ENCODE measurements at regions of chr7 and their contacts with region 1.

Region 1: DNA sequence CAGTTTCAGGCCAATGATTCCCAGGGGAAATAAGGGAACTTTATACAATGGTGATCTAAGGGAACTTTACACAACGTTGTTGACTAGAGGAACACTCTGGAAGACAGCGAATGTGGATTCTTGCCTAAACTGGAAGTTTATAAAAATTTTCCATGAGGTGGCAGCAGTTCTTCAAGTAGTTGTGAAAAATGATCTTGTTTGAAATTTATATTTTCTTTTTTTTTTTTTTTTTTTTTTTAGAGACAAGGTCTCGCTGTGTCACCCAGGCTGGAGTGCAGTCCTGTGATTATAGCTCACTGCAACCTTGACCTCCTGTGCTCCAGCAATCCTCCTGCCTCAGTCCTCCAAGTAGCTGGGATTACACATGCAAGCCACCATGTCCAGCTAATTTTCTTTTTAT is 32.1 kb upstream of the GTF2I start:
- DNase-seq: peak in 1 of 5 donors; percentile 29
- H3K4me3 ChIP-seq: no peak overlapping the region
- H3K27ac ChIP-seq: no peak overlapping the region
- H3K4me1 ChIP-seq: peaks cover 5% of the 10 kb centered on the region
- H3K27me3 ChIP-seq: no peaks in the 10 kb centered on the region
- CTCF ChIP-seq: no peak
- EP300 ChIP-seq: no peak
- POLR2A ChIP-seq: no peak

Region 2: GRCh38 chr7:74439546-74439945 is 185.9 kb before region 1 on chr7:
- intact Hi-C with region 1: loop called in 1 of 4 experiments (anchors 5 kb)
- DNase-seq: no peak
- H3K4me3 ChIP-seq: no peak overlapping the region
- H3K27ac ChIP-seq: no peak overlapping the region
- H3K4me1 ChIP-seq: no peaks in the 10 kb centered on the region
- H3K27me3 ChIP-seq: no peaks in the 10 kb centered on the region
- CTCF ChIP-seq: no peak
- EP300 ChIP-seq: no peak
- POLR2A ChIP-seq: no peak

Region 3: DNA sequence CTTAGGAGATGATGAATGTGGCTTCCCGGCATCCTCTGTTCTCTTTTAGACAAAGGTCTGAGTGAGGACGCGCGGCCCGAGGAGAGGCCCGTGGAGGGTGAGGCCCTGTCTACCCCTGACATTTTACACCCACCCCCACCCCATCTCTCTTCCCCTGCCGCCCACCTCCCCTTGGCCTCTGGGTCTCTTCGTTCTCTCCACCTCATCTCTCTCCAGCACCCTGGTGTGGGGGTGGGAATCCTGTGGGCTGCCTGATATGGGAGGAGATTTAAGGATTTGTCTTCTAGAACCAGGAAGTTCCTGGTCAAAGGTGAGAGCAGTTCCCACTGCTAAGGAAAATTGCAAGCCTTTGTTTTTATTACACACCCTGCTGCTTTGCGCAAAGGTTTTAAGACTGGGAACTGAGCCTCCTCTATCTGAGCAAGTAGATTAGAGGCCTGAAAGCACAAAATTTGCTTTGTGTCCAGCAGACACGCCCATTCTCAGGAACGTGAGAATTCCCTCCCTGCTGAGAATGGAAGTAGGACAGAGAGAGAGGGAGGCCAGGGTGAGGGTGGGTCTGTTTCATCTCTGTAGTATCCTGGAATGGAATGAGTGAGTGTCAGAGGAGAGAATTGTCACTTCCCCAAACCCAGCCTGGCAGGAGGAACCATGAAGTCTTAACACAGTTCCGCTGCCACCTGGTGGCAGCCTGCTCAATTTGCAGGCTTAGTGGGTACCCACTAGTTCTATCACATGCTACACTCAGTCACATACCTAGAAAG is 80.6 kb before region 1 on chr7:
- intact Hi-C with region 1: no loop called
- DNase-seq: no peak
- H3K4me3 ChIP-seq: no peak overlapping the region
- H3K27ac ChIP-seq: no peak overlapping the region
- H3K4me1 ChIP-seq: no peaks in the 10 kb centered on the region
- H3K27me3 ChIP-seq: no peaks in the 10 kb centered on the region
- CTCF ChIP-seq: no peak
- EP300 ChIP-seq: no peak
- POLR2A ChIP-seq: no peak

Region 4: GRCh38 chr7:74656837-74657691 is 31.6 kb after region 1 on chr7:
- intact Hi-C with region 1: loop called in 1 of 4 experiments (anchors 2 kb)
- DNase-seq: peak; percentile 97 to 99 (median 99)
- H3K4me3 ChIP-seq: peak overlapping the region; percentile 54
- H3K27ac ChIP-seq: peak overlapping the region in 1 of 2 donors; percentile 100
- H3K4me1 ChIP-seq: peaks cover 7% of the 10 kb centered on the region
- H3K27me3 ChIP-seq: no peaks in the 10 kb centered on the region
- CTCF ChIP-seq: no peak
- EP300 ChIP-seq: no peak
- POLR2A ChIP-seq: no peak

Region 5: GRCh38 chr7:74684921-74685320 is 59.5 kb after region 1 on chr7:
- intact Hi-C with region 1: no loop called
- DNase-seq: no peak
- H3K4me3 ChIP-seq: no peak overlapping the region
- H3K27ac ChIP-seq: no peak overlapping the region
- H3K4me1 ChIP-seq: peaks cover 4% of the 10 kb centered on the region
- H3K27me3 ChIP-seq: no peaks in the 10 kb centered on the region
- CTCF ChIP-seq: no peak
- EP300 ChIP-seq: no peak
- POLR2A ChIP-seq: no peak

Region 6: GRCh38 chr7:74709880-74710671 is 84.6 kb after region 1 on chr7:
- intact Hi-C with region 1: loop called in 1 of 4 experiments (anchors 10 kb)
- DNase-seq: no peak
- H3K4me3 ChIP-seq: no peak overlapping the region
- H3K27ac ChIP-seq: no peak overlapping the region
- H3K4me1 ChIP-seq: no peaks in the 10 kb centered on the region
- H3K27me3 ChIP-seq: no peaks in the 10 kb centered on the region
- CTCF ChIP-seq: no peak
- EP300 ChIP-seq: no peak
- POLR2A ChIP-seq: no peak